ENCODE measurements at regions of chr6 and their contacts with region 1.

Region 1: GRCh38 chr6:56292505-56293181 is 45.3 kb upstream of the COL21A1 start:
- DNase-seq: peak in 2 of 5 donors; percentile 19 to 41
- ATAC-seq: peak; percentile 83 to 93 (median 90)
- H3K4me3 ChIP-seq: no peak overlapping the region
- H3K27ac ChIP-seq: no peak overlapping the region
- H3K4me1 ChIP-seq: peaks cover 0 to 7% (median 3%) of the 10 kb centered on the region in 12 donors
- H3K27me3 ChIP-seq: no peaks in the 10 kb centered on the region
- CTCF ChIP-seq: peak; percentile 38 to 77 (median 67)
- POLR2A ChIP-seq: no peak

Region 2: GRCh38 chr6:55980627-55981211 is 311.9 kb before region 1 on chr6:
- intact Hi-C with region 1: loop called (anchors 1 to 2 kb)
- DNase-seq: peak in 1 of 5 donors; percentile 20
- ATAC-seq: no peak
- H3K4me3 ChIP-seq: no peak overlapping the region
- H3K27ac ChIP-seq: no peak overlapping the region
- H3K4me1 ChIP-seq: no peaks in the 10 kb centered on the region
- H3K27me3 ChIP-seq: no peaks in the 10 kb centered on the region
- CTCF ChIP-seq: peak; percentile 14 to 80 (median 72)
- POLR2A ChIP-seq: no peak

Region 3: GRCh38 chr6:55994531-55994930 is 298.1 kb before region 1 on chr6:
- intact Hi-C with region 1: loop called in 1 of 10 experiments (anchors 5 kb)
- DNase-seq: no peak
- ATAC-seq: no peak
- H3K4me3 ChIP-seq: no peak overlapping the region
- H3K27ac ChIP-seq: no peak overlapping the region
- H3K4me1 ChIP-seq: no peaks in the 10 kb centered on the region
- H3K27me3 ChIP-seq: no peaks in the 10 kb centered on the region
- CTCF ChIP-seq: no peak
- POLR2A ChIP-seq: no peak

Measured in heart left ventricle (tissue), 16 donors.